Endothelial cell of umbilical vein (primary cell): ENCODE measurements at regions of chr1 and their contacts with region 1.

Region 1: DNA sequence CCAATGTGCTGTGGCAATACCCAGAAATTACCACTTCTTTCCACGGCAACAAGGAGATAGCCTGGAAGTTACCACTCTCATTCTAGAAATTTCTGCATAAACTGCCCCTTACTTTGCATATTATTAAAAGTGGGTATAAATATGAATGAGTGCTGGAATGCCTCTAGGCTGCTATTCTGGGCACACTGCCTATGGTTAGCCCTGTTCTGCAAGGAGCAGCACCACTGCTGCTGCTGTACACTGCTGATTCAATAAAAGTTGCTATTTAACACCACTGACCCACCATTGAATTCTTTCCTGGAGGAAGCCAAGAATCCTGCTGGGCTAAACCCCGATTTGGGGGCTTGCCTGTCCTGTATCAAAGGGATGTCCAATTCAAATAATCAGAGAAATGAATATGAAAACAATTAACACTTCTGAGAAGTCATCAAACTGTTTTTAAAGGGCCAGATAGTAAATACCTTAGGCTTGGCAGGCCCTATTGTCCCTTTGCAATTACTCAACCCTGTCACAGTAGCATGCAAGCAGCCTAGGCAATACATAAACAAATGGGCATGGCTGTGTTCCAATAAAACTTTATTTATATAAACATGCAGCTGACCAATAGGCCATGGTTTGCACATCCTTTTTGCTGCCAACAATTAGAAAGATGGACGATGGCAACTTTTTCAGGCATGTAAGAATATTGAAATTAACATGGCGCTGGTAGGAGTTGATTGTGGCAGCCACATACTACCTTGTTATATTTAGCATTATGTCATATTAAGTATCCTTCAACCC is 369.4 kb upstream of the B3GALT2 start:
- DNase-seq: no peak
- H3K4me3 ChIP-seq: no peak overlapping the region
- H3K27ac ChIP-seq: no peak overlapping the region
- H3K4me1 ChIP-seq: peaks cover 12% of the 10 kb centered on the region
- H3K27me3 ChIP-seq: no peaks in the 10 kb centered on the region
- CTCF ChIP-seq: no peak
- POLR2A ChIP-seq: no peak

Region 2: DNA sequence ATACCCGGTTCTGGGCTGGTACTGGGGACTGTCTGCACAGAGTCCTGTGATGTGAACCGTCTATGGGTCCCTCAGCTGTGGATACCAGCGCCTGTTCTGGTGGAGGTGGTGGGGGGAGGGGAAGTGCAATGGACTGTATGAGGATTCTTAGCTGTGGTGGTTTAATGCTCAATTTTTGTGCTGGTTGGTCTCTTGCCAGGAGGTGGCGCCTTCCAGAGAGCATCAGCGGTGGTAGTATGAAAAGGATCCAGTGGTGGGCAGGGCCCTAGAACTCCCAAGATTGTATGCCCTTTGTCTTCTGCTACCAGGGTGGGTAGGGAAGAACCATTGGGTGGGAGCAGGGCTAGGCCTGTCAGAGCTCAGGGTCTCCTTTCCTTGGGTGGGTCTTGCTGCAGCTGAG is 280.1 kb before region 1 on chr1:
- CTCF ChIA-PET with region 1: no interaction called
- POLR2A ChIA-PET with region 1: no interaction called
- dilution Hi-C with region 1: no loop called
- intact Hi-C with region 1: no loop called
- DNase-seq: no peak
- H3K4me3 ChIP-seq: no peak overlapping the region
- H3K27ac ChIP-seq: no peak overlapping the region
- H3K4me1 ChIP-seq: no peaks in the 10 kb centered on the region
- H3K27me3 ChIP-seq: no peaks in the 10 kb centered on the region
- CTCF ChIP-seq: no peak
- POLR2A ChIP-seq: no peak

Region 3: GRCh38 chr1:193338194-193338593 is 217.7 kb before region 1 on chr1:
- CTCF ChIA-PET with region 1: no interaction called
- POLR2A ChIA-PET with region 1: no interaction called
- dilution Hi-C with region 1: no loop called
- intact Hi-C with region 1: no loop called
- DNase-seq: peak; percentile 27
- H3K4me3 ChIP-seq: no peak overlapping the region
- H3K27ac ChIP-seq: no peak overlapping the region
- H3K4me1 ChIP-seq: peaks cover 6% of the 10 kb centered on the region
- H3K27me3 ChIP-seq: no peaks in the 10 kb centered on the region
- CTCF ChIP-seq: no peak
- POLR2A ChIP-seq: no peak

Region 4: DNA sequence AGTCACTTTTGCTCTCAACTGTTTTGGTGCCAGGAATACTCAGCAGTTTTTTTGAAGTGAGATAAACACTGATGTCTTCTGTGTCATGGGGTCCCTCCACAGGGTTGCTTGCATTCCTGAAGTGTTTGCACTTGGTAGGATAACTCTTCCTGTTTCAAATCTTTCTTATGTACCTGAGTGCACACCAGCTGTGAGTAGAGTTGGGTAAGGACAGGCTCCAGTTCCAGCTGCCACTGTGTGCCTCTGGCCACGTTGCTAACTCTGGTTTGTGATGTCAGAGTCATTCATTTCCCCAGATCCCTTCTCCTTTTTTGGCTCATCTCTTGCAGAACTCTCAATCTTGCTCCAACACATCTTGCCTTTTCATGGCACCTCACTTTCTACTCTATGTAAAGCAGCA is 13.2 kb before region 1 on chr1:
- CTCF ChIA-PET with region 1: interaction called, 4 read pairs
- POLR2A ChIA-PET with region 1: no interaction called
- dilution Hi-C with region 1: no loop called
- intact Hi-C with region 1: loop called (anchors 1 kb)
- DNase-seq: no peak
- H3K4me3 ChIP-seq: no peak overlapping the region
- H3K27ac ChIP-seq: no peak overlapping the region
- H3K4me1 ChIP-seq: no peaks in the 10 kb centered on the region
- H3K27me3 ChIP-seq: no peaks in the 10 kb centered on the region
- CTCF ChIP-seq: no peak
- POLR2A ChIP-seq: no peak

Region 5: GRCh38 chr1:193827516-193827915 is 271.7 kb after region 1 on chr1:
- CTCF ChIA-PET with region 1: no interaction called
- POLR2A ChIA-PET with region 1: no interaction called
- dilution Hi-C with region 1: no loop called
- intact Hi-C with region 1: no loop called
- DNase-seq: no peak
- H3K4me3 ChIP-seq: no peak overlapping the region
- H3K27ac ChIP-seq: no peak overlapping the region
- H3K4me1 ChIP-seq: no peaks in the 10 kb centered on the region
- H3K27me3 ChIP-seq: no peaks in the 10 kb centered on the region
- CTCF ChIP-seq: no peak
- POLR2A ChIP-seq: no peak

Region 6: DNA sequence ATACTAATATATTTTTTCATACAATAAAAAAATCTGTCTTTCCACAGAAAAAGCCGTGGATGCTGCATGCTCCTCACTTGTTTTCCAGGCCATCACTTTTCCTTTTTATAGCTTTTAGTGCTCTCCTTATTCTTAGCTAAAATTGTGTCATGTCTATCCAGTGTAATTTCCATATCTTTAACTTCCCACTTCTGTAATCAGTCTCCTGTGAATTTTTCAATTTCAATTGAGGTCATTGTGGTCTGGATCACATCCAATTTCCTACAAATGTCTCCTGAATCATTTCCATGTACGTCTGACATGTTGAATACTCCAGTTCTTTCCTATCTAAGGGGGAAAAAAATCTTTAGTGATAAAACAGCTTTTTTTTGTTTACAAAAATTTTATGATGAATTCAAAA is 468.8 kb after region 1 on chr1:
- CTCF ChIA-PET with region 1: no interaction called
- POLR2A ChIA-PET with region 1: no interaction called
- dilution Hi-C with region 1: no loop called
- intact Hi-C with region 1: no loop called
- DNase-seq: peak; percentile 94
- H3K4me3 ChIP-seq: no peak overlapping the region
- H3K27ac ChIP-seq: peak overlapping the region; percentile 45
- H3K4me1 ChIP-seq: peaks cover 11% of the 10 kb centered on the region
- H3K27me3 ChIP-seq: no peaks in the 10 kb centered on the region
- CTCF ChIP-seq: no peak
- POLR2A ChIP-seq: no peak